Activated CD4-positive, alpha-beta T cell treated with anti-CD3 and anti-CD28 coated beads, Interleukin-2, amount 10 ng/mL, durations not matched to agents 7 days and 5 days (primary cell): ENCODE measurements at regions of chr10 and their contacts with region 1.

Region 1: DNA sequence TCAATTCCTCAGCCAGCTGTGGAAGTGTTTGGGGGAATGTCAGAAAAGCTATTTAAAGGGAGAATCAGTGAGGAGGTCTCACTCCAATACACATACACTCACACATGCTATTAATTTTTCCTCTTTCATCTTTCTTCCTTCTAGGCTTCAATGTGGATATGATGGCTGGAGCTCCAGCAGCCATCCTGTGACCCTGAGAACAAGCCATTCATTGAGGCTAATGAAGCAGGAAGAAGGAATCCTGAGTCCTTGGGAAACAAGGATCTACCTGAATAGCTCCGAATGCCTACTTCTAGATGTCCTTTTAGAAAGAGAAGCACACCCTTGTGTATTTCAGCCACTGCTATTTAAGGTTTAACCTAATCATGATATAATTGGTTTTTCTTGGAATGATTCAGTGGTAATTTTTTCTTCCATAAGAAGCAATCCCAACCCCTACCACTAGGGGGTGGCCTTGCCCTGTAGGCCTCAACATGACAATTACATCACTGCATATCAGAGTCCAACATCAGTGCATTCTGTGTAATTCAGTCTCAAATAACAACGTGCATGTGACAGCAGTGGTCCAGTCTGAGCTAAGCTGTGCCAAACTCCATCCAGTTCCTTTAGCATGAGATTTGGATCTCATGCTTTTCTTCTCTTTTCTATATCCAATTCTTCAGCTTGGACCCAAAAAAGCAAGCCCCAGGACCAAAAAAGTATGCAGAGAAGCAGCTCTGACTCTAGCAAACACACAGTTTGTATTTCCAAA is 85.3 kb upstream of the ANKRD1 start:
- DNase-seq: peak; percentile 72
- H3K4me3 Mint-ChIP-seq: peak overlapping the region; percentile 50
- H3K27ac Mint-ChIP-seq: peak overlapping the region; percentile 83
- H3K4me1 Mint-ChIP-seq: peaks cover 37% of the 10 kb centered on the region
- H3K27me3 Mint-ChIP-seq: peaks cover 5% of the 10 kb centered on the region

Region 2: GRCh38 chr10:90993340-90993739 is 12.8 kb before region 1 on chr10:
- CTCF ChIA-PET with region 1: interaction called, 10 read pairs
- POLR2A ChIA-PET with region 1: no interaction called
- DNase-seq: no peak
- H3K4me3 Mint-ChIP-seq: no peak overlapping the region
- H3K27ac Mint-ChIP-seq: no peak overlapping the region
- H3K4me1 Mint-ChIP-seq: no peaks in the 10 kb centered on the region
- H3K27me3 Mint-ChIP-seq: peaks cover 17% of the 10 kb centered on the region

Region 3: DNA sequence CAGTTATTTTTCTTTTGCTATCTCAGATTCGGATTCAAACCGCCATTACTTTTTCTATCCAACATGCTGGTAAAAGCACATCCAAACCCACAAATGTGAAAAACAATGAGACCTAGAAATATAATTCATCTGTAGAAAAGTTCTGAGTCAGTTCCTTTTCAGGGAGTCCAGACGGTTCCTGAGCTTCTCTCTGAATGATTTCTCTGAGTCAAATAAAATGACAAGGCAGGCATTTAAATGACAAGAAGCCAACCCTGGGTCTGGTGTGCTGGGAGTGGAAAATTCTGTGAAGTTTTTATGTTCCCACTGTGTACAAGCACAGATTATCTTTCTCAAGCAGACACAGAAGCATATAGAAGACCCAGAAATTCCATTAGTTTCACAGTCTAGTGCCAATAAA is 11.0 kb after region 1 on chr10:
- CTCF ChIA-PET with region 1: interaction called, 15 read pairs
- POLR2A ChIA-PET with region 1: no interaction called
- DNase-seq: no peak
- H3K4me3 Mint-ChIP-seq: no peak overlapping the region
- H3K27ac Mint-ChIP-seq: no peak overlapping the region
- H3K4me1 Mint-ChIP-seq: no peaks in the 10 kb centered on the region
- H3K27me3 Mint-ChIP-seq: peaks cover 23% of the 10 kb centered on the region